Heart right ventricle (tissue), 16 donors: ENCODE measurements at regions of chr5 and their contacts with region 1.

Region 1: GRCh38 chr5:71757590-71758543 is 38.8 kb downstream of the CARTPT start:
- DNase-seq: peak; percentile 28 to 48
- ATAC-seq: peak; percentile 84 to 99 (median 94)
- H3K4me3 ChIP-seq: peak overlapping the region in 6 of 10 donors; percentile 18 to 37 (median 27)
- H3K27ac ChIP-seq: peak overlapping the region in 2 of 10 donors; percentile 16 to 20
- H3K4me1 ChIP-seq: peaks cover 0 to 9% (median 0%) of the 10 kb centered on the region in 9 donors
- H3K27me3 ChIP-seq: no peaks in the 10 kb centered on the region
- CTCF ChIP-seq: peak; percentile 46 to 85 (median 74)

Region 2: GRCh38 chr5:71384706-71385105 is 373.2 kb before region 1 on chr5:
- intact Hi-C with region 1: no loop called
- DNase-seq: no peak
- ATAC-seq: no peak
- H3K4me3 ChIP-seq: no peak overlapping the region
- H3K27ac ChIP-seq: no peak overlapping the region
- H3K4me1 ChIP-seq: no peaks in the 10 kb centered on the region
- H3K27me3 ChIP-seq: no peaks in the 10 kb centered on the region
- CTCF ChIP-seq: no peak

Region 3: GRCh38 chr5:71475788-71476384 is 282.0 kb before region 1 on chr5:
- intact Hi-C with region 1: loop called in 3 of 10 experiments (anchors 5 to 10 kb)
- DNase-seq: no peak
- ATAC-seq: no peak
- H3K4me3 ChIP-seq: no peak overlapping the region
- H3K27ac ChIP-seq: no peak overlapping the region
- H3K4me1 ChIP-seq: no peaks in the 10 kb centered on the region
- H3K27me3 ChIP-seq: no peaks in the 10 kb centered on the region
- CTCF ChIP-seq: peak in 7 of 9 donors; percentile 37 to 56 (median 45)

Region 4: DNA sequence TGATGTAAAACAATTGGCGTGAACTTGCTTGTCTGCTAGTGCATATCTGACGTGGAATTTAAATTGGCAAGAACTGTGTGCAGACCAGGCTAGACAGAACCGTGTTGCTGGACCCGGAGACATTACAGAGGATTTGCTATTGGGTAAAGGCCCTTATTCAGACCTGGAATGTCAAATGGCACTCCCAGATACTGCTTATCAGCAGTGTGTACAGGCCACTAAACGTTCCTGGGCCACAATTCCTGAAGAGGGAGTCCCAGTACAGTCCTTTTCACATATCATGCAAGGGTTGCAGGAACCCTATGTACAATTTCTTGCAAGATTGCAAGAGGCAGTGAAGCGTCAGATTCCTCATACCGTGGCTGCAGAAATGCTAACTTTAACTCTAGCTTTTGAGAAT is 184.3 kb before region 1 on chr5:
- intact Hi-C with region 1: loop called in 8 of 10 experiments (anchors 2 to 10 kb)
- DNase-seq: no peak
- ATAC-seq: peak in 6 of 8 donors; percentile 38 to 86 (median 71)
- H3K4me3 ChIP-seq: no peak overlapping the region
- H3K27ac ChIP-seq: no peak overlapping the region
- H3K4me1 ChIP-seq: peaks cover 0 to 11% (median 0%) of the 10 kb centered on the region in 9 donors
- H3K27me3 ChIP-seq: no peaks in the 10 kb centered on the region
- CTCF ChIP-seq: peak in 5 of 9 donors; percentile 12 to 44 (median 38)

Region 5: DNA sequence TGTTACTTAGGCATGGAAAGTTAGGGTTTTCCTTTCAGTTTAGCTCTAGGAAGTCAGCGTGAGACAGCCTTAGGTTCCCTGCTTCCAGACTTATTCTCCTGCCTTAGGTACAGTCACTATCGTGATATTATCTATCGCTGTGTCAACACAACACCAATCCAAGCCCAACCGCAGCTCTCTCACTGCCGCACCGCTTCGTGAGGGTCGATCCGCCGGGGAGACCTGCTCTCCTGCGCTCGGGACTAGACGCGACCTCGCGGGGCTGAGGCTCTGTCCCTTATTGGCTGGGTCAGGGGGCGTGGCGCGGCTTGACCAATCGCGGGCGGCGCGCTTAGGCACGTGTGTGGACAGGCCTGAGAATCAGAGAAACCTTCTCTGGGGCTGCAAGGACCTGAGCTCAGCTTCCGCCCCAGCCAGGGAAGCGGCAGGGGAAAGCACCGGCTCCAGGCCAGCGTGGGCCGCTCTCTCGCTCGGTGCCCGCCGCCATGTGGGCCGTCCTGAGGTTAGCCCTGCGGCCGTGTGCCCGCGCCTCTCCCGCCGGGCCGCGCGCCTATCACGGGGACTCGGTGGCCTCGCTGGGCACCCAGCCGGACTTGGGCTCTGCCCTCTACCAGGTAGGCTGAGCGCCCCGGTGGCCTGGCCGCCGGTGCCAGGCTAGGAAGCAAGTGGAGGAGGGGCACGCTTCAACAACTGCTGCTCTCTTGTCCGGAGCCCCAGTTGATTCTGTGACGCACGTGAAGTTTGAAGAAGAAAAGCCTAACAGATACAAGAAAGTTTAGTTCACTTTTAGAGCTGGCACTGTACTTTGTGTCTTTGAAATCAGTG is 170.7 kb before region 1 on chr5 and contains the start of gene MCCC2:
- intact Hi-C with region 1: loop called in 3 of 10 experiments (anchors 5 to 10 kb)
- DNase-seq: peak; percentile 97 to 98
- ATAC-seq: peak; percentile 100
- H3K4me3 ChIP-seq: peak within 1 kb of the TSS; percentile 35 to 98 (median 76)
- H3K27ac ChIP-seq: peak within 1 kb of the TSS; percentile 77 to 91 (median 82)
- H3K4me1 ChIP-seq: peaks cover 0 to 30% (median 18%) of the 10 kb centered on the region in 9 donors
- H3K27me3 ChIP-seq: no peaks in the 10 kb centered on the region
- CTCF ChIP-seq: peak in 1 of 9 donors; percentile 3
- total RNA-seq, gene MCCC2: 79.8 to 149 (median 127) TPM

Region 6: GRCh38 chr5:72063219-72063819 is 305.5 kb after region 1 on chr5:
- intact Hi-C with region 1: no loop called
- DNase-seq: no peak
- ATAC-seq: no peak
- H3K4me3 ChIP-seq: no peak overlapping the region
- H3K27ac ChIP-seq: no peak overlapping the region
- H3K4me1 ChIP-seq: no peaks in the 10 kb centered on the region
- H3K27me3 ChIP-seq: peaks cover 0 to 4% (median 0%) of the 10 kb centered on the region in 7 donors
- CTCF ChIP-seq: no peak

Region 7: DNA sequence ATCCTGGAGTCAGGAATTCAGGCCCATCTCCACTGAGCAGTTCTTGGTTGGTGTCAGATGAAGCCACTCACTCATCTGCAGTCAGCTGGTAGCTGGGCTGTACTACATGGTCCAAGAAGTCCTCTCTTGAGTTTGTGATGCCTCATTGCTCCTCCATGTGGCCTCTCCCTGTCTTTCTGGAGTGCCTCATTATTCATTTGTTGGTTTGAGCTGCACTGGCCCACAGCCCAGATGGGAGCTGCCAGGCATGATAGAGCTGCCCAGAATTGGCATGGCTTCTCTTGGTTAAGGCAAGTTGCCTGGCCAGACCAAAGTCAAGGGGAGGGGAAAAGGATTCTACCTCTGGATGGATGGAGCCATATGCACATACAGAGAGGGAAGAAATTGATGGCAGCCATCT is 570.3 kb after region 1 on chr5:
- intact Hi-C with region 1: no loop called
- DNase-seq: peak; percentile 52 to 68
- ATAC-seq: peak; percentile 85 to 97 (median 92)
- H3K4me3 ChIP-seq: no peak overlapping the region
- H3K27ac ChIP-seq: peak overlapping the region in 1 of 10 donors; percentile 2
- H3K4me1 ChIP-seq: peaks cover 0 to 7% (median 0%) of the 10 kb centered on the region in 9 donors
- H3K27me3 ChIP-seq: no peaks in the 10 kb centered on the region
- CTCF ChIP-seq: peak in 3 of 9 donors; percentile 15 to 26 (median 16)